ENCODE measurements at regions of chr4 and their contacts with region 1.

Region 1: DNA sequence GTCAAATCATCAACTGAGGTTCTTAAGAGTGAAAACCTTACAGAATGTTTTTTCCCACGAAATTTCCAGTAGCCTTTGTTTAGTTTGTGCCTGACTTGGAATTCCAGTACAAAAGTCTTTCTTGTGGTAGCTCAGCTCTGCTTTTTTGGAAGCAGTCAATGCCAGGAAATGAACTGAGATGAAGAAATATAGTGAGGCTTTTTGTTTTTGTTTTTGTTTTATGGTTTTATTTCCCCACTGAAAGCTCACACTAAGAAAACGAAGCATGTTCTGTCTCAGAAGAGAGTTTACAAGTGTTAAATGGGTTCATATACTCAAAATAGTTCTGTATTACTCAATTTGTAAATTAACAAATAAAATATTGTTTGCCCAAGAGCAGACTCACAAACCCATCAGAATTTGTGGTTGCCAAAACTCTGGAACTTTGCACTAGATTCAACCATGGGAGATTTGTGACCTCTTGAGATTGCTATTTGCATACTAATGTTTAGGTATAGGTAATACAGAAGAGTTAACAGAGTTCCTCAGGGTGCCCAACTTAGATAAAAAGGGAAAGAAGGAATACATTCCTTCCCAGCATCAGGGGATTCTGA is 1060.8 kb downstream of the FAT4 start:
- DNase-seq: no peak
- H3K4me3 ChIP-seq: no peak overlapping the region
- H3K27ac ChIP-seq: no peak overlapping the region
- H3K4me1 ChIP-seq: no peaks in the 10 kb centered on the region
- H3K27me3 ChIP-seq: no peaks in the 10 kb centered on the region
- CTCF ChIP-seq: no peak
- EP300 ChIP-seq: no peak
- POLR2A ChIP-seq: no peak

Region 2: GRCh38 chr4:126364311-126364911 is 11.1 kb before region 1 on chr4:
- intact Hi-C with region 1: loop called in 1 of 4 experiments (anchors 2 kb)
- DNase-seq: no peak
- H3K4me3 ChIP-seq: no peak overlapping the region
- H3K27ac ChIP-seq: no peak overlapping the region
- H3K4me1 ChIP-seq: peaks cover 3% of the 10 kb centered on the region
- H3K27me3 ChIP-seq: no peaks in the 10 kb centered on the region
- CTCF ChIP-seq: no peak
- EP300 ChIP-seq: no peak
- POLR2A ChIP-seq: no peak

Region 3: GRCh38 chr4:126441173-126442035 is 65.8 kb after region 1 on chr4:
- intact Hi-C with region 1: loop called in 1 of 4 experiments (anchors 2 kb)
- DNase-seq: no peak
- H3K4me3 ChIP-seq: no peak overlapping the region
- H3K27ac ChIP-seq: no peak overlapping the region
- H3K4me1 ChIP-seq: no peaks in the 10 kb centered on the region
- H3K27me3 ChIP-seq: no peaks in the 10 kb centered on the region
- CTCF ChIP-seq: no peak
- EP300 ChIP-seq: no peak
- POLR2A ChIP-seq: no peak

Region 4: DNA sequence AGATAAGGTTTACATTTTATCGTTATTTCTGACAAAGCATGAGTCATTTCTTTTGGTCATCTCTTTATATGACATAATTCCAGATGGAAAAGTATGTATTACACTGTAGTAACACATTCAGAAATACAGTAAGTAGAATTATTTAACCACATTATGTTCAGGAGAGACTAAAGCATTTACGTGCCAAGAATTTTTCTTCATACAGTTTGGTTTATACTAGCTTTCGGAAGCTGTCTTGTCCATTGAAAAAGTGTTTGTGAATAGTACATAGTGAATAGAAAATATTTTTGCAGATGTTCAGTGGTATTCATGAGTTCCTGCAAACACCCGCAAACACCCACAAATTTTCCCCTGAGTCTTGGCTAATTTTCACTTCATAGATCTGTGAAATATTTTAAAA is 224.2 kb after region 1 on chr4:
- intact Hi-C with region 1: no loop called
- DNase-seq: no peak
- H3K4me3 ChIP-seq: no peak overlapping the region
- H3K27ac ChIP-seq: no peak overlapping the region
- H3K4me1 ChIP-seq: no peaks in the 10 kb centered on the region
- H3K27me3 ChIP-seq: no peaks in the 10 kb centered on the region
- CTCF ChIP-seq: no peak
- EP300 ChIP-seq: no peak
- POLR2A ChIP-seq: no peak